MCF 10A (cell line): ENCODE measurements at regions of chr7 and their contacts with region 1.

Region 1: GRCh38 chr7:44240983-44241510 is 40.3 kb downstream of the YKT6 start:
- DNase-seq: peak; percentile 85
- H3K4me3 Mint-ChIP-seq: no peak overlapping the region
- H3K27ac Mint-ChIP-seq: peak overlapping the region; percentile 27
- H3K4me1 Mint-ChIP-seq: peaks cover 7% of the 10 kb centered on the region
- H3K27me3 Mint-ChIP-seq: no peaks in the 10 kb centered on the region
- CTCF ChIP-seq: peak; percentile 83

Region 2: DNA sequence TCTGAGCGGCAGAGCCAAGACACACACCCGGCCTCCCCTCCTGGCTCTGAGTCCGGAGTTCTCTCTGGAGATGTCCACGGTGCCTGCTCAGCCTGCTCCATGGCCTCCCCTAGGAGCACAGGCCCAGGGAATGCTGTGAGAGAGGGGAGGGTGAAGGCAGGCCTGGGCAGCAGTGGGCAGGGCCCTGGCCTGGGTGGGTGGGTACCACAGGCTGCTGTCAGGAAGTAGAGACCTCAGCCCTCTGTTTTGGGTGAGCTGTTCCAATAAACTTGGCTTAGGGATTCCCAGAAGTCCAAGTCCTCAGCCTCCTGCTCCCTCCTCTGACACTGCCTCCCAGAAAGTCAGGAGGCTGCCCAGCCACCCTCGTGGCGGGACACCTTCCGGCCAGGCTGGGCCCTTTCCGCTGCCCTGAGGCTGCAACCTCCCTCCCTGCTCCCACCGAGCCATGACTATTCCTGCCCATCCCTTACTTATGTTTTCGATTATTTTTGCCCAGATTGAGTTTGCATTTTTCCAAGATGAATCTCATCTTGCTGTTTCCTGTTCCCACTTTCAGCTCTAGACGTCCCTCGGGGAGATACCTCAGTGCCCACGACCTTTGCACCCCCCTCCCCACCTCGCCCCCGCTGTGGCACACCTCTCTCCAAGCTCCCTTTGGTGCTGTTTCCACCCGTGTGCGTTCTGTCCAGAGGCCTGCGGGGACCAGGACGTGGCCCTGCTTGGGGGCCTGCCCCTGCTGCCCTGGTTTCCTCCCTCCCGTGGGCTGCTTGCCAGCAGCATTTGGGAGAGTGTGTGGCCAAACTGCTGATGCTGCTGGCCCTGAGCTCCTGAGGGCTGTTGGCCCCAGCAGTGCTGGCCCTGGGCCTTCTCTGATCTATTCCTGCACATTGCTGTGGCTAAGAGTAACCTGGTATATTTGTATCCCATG is 152.9 kb before region 1 on chr7:
- CTCF ChIA-PET with region 1: no interaction called
- POLR2A ChIA-PET with region 1: no interaction called
- intact Hi-C with region 1: no loop called
- DNase-seq: peak; percentile 57
- H3K4me3 Mint-ChIP-seq: no peak overlapping the region
- H3K27ac Mint-ChIP-seq: peak overlapping the region; percentile 73
- H3K4me1 Mint-ChIP-seq: peaks cover 8% of the 10 kb centered on the region
- H3K27me3 Mint-ChIP-seq: no peaks in the 10 kb centered on the region
- CTCF ChIP-seq: no peak

Region 3: DNA sequence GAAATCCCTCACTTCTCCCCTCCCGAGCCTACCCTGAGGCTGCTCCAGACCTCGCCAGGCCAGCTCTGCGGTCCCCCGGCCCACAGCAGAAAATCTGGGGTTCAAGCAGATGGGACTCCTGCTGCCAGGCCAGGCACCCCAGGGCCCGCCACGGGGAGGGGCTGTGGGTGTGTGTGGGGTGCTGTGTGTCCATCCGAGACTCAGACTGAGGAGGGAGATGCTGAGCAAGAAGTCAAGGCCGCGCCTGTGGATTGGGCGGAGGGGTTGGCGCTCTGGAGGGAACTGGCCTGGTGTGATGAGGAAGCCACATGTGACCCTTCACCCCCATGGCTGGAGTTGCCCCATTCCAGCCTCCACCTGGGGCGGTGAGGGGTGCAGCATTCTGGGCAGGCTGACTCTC is 10.8 kb after region 1 on chr7:
- CTCF ChIA-PET with region 1: interaction called, 17 read pairs
- POLR2A ChIA-PET with region 1: no interaction called
- intact Hi-C with region 1: no loop called
- DNase-seq: no peak
- H3K4me3 Mint-ChIP-seq: no peak overlapping the region
- H3K27ac Mint-ChIP-seq: no peak overlapping the region
- H3K4me1 Mint-ChIP-seq: no peaks in the 10 kb centered on the region
- H3K27me3 Mint-ChIP-seq: no peaks in the 10 kb centered on the region
- CTCF ChIP-seq: no peak

Region 4: DNA sequence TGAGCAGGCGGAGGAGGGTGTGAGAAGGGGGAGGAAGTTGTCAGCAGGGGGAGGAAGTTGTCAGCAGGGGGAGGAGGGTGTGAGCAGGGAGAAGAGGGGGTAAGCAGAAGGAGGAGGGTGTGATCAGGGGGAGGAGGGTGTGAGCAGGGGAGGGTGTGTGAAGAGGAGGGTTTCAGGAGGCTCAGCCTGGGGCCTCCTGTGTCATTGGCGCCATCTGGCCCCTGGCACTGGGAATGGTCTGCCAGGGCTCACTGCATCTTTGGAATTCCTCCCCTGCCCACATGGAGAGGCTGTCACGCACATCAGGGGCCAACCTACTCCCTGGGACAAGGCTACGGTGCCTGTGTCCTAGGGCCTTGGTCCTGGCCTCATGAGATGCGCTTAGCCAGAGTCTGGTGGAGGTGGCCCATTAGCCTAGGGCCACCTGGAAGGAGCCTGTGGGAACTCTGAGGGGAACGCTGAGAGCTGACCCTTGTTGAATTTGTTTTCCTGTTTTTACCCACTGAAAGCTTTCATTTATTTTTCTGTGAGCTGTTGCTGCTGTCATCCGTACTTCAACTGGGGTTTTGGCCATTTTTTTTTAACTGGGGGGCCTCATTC is 66.4 kb after region 1 on chr7:
- CTCF ChIA-PET with region 1: interaction called, 6 read pairs
- POLR2A ChIA-PET with region 1: no interaction called
- intact Hi-C with region 1: loop called (anchors 1 kb)
- DNase-seq: peak; percentile 76
- H3K4me3 Mint-ChIP-seq: no peak overlapping the region
- H3K27ac Mint-ChIP-seq: peak overlapping the region; percentile 64
- H3K4me1 Mint-ChIP-seq: peaks cover 10% of the 10 kb centered on the region
- H3K27me3 Mint-ChIP-seq: no peaks in the 10 kb centered on the region
- CTCF ChIP-seq: peak; percentile 29

Region 5: GRCh38 chr7:44408596-44408995 is 167.5 kb after region 1 on chr7:
- CTCF ChIA-PET with region 1: interaction called, 11 read pairs
- POLR2A ChIA-PET with region 1: no interaction called
- intact Hi-C with region 1: no loop called
- DNase-seq: no peak
- H3K4me3 Mint-ChIP-seq: no peak overlapping the region
- H3K27ac Mint-ChIP-seq: no peak overlapping the region
- H3K4me1 Mint-ChIP-seq: no peaks in the 10 kb centered on the region
- H3K27me3 Mint-ChIP-seq: no peaks in the 10 kb centered on the region
- CTCF ChIP-seq: no peak

Region 6: GRCh38 chr7:44454348-44454747 is 213.3 kb after region 1 on chr7:
- CTCF ChIA-PET with region 1: interaction called, 10 read pairs
- POLR2A ChIA-PET with region 1: no interaction called
- intact Hi-C with region 1: no loop called
- DNase-seq: no peak
- H3K4me3 Mint-ChIP-seq: no peak overlapping the region
- H3K27ac Mint-ChIP-seq: no peak overlapping the region
- H3K4me1 Mint-ChIP-seq: peaks cover 11% of the 10 kb centered on the region
- H3K27me3 Mint-ChIP-seq: no peaks in the 10 kb centered on the region
- CTCF ChIP-seq: no peak

Region 7: GRCh38 chr7:44477063-44477830 is 236.2 kb after region 1 on chr7:
- CTCF ChIA-PET with region 1: interaction called, 46 read pairs
- POLR2A ChIA-PET with region 1: interaction called, 3 read pairs
- intact Hi-C with region 1: loop called (anchors 1 kb)
- DNase-seq: peak; percentile 88
- H3K4me3 Mint-ChIP-seq: no peak overlapping the region
- H3K27ac Mint-ChIP-seq: no peak overlapping the region
- H3K4me1 Mint-ChIP-seq: peaks cover 22% of the 10 kb centered on the region
- H3K27me3 Mint-ChIP-seq: no peaks in the 10 kb centered on the region
- CTCF ChIP-seq: peak; percentile 91